Cardiac septum (tissue), 1 donor: ENCODE measurements at regions of chr2 and their contacts with region 1.

Region 1: GRCh38 chr2:160869411-160869810 is 290.8 kb upstream of the TANK start:
- DNase-seq: no peak

Region 2: DNA sequence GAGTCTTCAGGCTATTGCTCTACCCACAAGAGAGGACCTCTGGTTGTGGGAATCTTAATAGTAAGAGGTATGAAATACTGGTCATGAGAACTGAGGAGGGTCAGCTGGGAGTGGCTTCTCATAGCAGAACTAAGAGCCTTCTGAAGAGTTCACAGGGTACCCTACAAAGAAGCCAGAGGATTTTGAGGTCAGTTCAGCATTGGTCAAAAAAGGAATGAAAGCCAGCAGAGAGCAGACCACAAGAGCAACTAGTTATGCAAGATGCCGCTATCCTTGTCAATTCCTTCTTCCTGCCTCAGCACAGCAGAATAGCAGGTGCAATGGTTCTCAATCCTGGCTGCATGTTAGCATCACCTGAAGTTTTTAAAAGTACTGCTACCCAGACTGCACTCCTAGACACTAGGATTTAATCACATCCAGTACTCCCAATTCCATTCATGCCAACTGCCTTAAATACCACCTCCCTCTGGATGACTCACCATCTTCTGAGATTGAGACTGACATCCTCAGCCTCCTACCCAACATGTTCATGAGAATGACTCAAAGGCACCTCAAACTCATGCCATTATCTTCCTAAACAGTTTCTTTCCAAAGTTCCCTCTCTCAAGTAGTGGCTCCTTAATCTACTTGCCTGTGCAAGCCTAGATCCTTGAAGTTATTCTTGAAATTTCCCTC is 294.8 kb before region 1 on chr2:
- intact Hi-C with region 1: no loop called
- DNase-seq: no peak

Region 3: DNA sequence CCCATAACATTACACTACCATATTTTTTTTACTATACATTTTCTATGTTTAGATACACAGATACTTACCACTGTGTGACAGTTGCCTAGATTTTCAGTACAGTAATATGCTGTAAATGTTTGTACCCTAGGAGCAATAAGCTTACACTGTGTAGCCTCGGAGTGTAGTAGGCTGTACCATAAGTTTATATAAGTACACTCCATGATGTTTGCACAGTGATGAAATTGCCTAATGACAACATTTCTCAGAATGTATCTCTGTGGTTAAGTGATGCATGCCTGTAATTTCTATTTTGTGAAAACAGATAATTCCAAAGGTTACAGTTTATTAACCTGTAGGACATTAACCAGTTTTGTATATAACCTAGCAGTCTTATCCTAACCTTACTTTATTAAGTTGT is 247.7 kb before region 1 on chr2:
- intact Hi-C with region 1: no loop called
- DNase-seq: no peak

Region 4: DNA sequence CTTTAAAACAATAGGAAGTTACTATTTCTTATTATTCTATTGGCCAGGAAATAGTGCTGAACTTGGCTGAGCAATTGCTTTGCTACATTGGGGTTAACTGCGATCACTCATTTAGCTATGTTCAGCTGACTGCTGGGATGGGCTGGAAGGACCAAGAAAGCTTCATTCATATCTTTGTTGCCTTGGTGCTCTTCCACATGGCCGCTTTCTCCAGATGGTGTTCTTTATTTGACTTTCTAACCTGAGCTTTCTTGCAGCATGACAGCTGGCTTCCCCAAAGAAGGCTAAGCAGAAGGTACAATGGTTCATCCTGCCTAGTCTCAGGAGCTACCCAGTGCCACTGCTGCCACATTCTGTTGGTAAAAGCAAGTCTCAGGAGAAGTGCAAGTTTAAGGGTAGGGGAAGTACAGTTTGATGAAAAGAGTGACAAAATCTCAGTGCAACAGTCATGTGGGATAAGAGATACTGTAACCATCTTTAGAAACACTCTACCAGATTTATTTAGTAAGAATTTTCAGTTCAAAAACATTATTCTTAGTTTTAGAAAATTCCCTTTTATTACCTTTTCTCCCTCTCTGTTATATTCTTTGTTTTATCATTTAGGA is 195.2 kb before region 1 on chr2:
- intact Hi-C with region 1: loop called (anchors 10 kb)
- DNase-seq: no peak